ENCODE measurements at regions of chr2 and their contacts with region 1.

Region 1: GRCh38 chr2:226800941-226801784 is 1.5 kb upstream of the IRS1 start:
- DNase-seq: peak; percentile 89 to 92 (median 90)
- ATAC-seq: peak; percentile 81
- H3K4me3 ChIP-seq: peak overlapping the region in 1 of 2 donors; percentile 17
- H3K27ac ChIP-seq: peak overlapping the region; percentile 82 to 94 (median 88)
- H3K4me1 ChIP-seq: peaks cover 46% of the 10 kb centered on the region
- H3K27me3 ChIP-seq: no peaks in the 10 kb centered on the region
- CTCF ChIP-seq: peak in 2 of 7 experiments; percentile 5 to 12
- POLR2A ChIP-seq: peak; percentile 45 to 78 (median 73)

Region 2: GRCh38 chr2:225670111-225670974 is 1130.8 kb before region 1 on chr2:
- intact Hi-C with region 1: loop called (anchors 10 kb)
- DNase-seq: no peak
- ATAC-seq: no peak
- H3K4me3 ChIP-seq: no peak overlapping the region
- H3K27ac ChIP-seq: no peak overlapping the region
- H3K4me1 ChIP-seq: no peaks in the 10 kb centered on the region
- H3K27me3 ChIP-seq: no peaks in the 10 kb centered on the region
- CTCF ChIP-seq: peak in 6 of 7 experiments; percentile 22 to 47 (median 38)
- POLR2A ChIP-seq: no peak

Region 3: GRCh38 chr2:226220511-226220910 is 580.7 kb before region 1 on chr2:
- intact Hi-C with region 1: loop called (anchors 10 kb)
- DNase-seq: no peak
- ATAC-seq: no peak
- H3K4me3 ChIP-seq: no peak overlapping the region
- H3K27ac ChIP-seq: no peak overlapping the region
- H3K4me1 ChIP-seq: no peaks in the 10 kb centered on the region
- H3K27me3 ChIP-seq: no peaks in the 10 kb centered on the region
- CTCF ChIP-seq: no peak
- POLR2A ChIP-seq: no peak

Measured in body of pancreas (tissue), 4 donors.